Endothelial cell of umbilical vein (primary cell): ENCODE measurements at regions of chr14 and their contacts with region 1.

Region 1: DNA sequence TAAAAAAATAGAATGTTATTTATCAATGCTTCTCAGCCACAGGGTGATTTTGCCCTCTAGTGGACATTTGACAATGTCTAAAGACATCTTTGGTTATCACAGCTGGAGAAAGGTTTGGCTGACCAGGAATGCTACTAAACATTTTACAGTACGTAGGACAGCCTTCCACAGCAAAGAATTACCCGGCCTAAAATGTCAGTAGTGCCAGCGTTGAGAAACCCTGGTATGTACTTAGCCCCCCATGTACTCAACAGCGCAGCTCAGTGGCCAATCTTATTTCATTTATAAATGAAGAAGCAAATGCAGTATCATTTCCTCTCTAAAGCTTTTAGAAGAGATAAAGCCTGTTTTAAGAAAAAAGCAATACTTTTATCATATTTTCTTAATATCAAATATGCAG is 5.8 kb downstream of the MARK3 start:
- DNase-seq: peak; percentile 80
- H3K4me3 ChIP-seq: no peak overlapping the region
- H3K27ac ChIP-seq: no peak overlapping the region
- H3K4me1 ChIP-seq: peaks cover 37% of the 10 kb centered on the region
- H3K27me3 ChIP-seq: no peaks in the 10 kb centered on the region
- CTCF ChIP-seq: peak; percentile 49 to 64
- POLR2A ChIP-seq: no peak

Region 2: DNA sequence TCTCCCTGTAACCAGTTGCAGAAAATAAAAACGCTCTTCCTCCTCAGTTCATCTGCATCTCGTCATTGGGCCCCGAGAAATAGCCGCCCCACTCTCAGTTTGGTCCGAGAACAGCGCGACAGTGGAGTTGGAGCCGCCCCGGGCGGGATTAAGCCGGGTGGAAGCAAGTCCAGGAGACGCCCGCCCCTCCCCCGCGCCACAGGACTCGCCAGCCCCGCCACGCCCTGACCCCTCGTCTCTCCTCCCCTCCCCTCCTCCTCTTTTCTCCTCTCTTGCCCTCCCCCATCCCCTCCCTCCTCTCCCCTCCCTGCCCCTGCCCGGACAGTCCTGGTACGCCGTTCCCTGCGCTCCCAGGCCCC is 184.0 kb before region 1 on chr14:
- CTCF ChIA-PET with region 1: no interaction called
- POLR2A ChIA-PET with region 1: no interaction called
- dilution Hi-C with region 1: no loop called
- intact Hi-C with region 1: no loop called
- DNase-seq: no peak
- H3K4me3 ChIP-seq: peak overlapping the region in 1 of 3 experiments; percentile 39
- H3K27ac ChIP-seq: no peak overlapping the region
- H3K4me1 ChIP-seq: no peaks in the 10 kb centered on the region
- H3K27me3 ChIP-seq: peaks cover 16 to 26% of the 10 kb centered on the region in 2 experiments
- CTCF ChIP-seq: no peak
- POLR2A ChIP-seq: no peak

Region 3: GRCh38 chr14:103292426-103293374 is 98.3 kb before region 1 on chr14:
- CTCF ChIA-PET with region 1: interaction called, 3 read pairs
- POLR2A ChIA-PET with region 1: no interaction called
- dilution Hi-C with region 1: no loop called
- intact Hi-C with region 1: loop called (anchors 5 kb)
- DNase-seq: peak; percentile 53
- H3K4me3 ChIP-seq: no peak overlapping the region
- H3K27ac ChIP-seq: no peak overlapping the region
- H3K4me1 ChIP-seq: no peaks in the 10 kb centered on the region
- H3K27me3 ChIP-seq: peaks cover 0 to 4% of the 10 kb centered on the region in 2 experiments
- CTCF ChIP-seq: peak; percentile 90
- POLR2A ChIP-seq: no peak

Region 4: DNA sequence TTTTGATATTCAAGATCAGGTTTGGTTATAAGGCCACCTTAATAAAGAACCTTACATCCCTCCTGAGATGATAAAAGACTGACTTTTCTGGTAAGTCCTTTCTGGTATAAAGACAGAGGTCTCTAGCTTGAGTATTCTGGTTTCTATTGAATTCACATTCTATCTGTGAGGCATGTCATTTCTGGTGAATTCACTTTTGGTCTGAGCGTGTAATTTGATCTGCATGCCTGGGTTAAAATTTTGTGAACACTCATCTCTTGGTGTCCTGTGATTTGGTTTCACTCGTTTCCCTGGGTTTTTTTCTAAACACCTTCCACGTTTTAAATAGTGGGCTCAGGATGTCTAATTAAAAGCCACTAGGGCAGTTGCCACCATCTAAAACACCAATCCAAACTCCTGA is 44.8 kb before region 1 on chr14:
- CTCF ChIA-PET with region 1: interaction called, 74 read pairs
- POLR2A ChIA-PET with region 1: interaction called, 19 read pairs
- dilution Hi-C with region 1: no loop called
- intact Hi-C with region 1: loop called (anchors 5 kb)
- DNase-seq: no peak
- H3K4me3 ChIP-seq: no peak overlapping the region
- H3K27ac ChIP-seq: no peak overlapping the region
- H3K4me1 ChIP-seq: no peaks in the 10 kb centered on the region
- H3K27me3 ChIP-seq: no peaks in the 10 kb centered on the region
- CTCF ChIP-seq: no peak
- POLR2A ChIP-seq: no peak

Region 5: DNA sequence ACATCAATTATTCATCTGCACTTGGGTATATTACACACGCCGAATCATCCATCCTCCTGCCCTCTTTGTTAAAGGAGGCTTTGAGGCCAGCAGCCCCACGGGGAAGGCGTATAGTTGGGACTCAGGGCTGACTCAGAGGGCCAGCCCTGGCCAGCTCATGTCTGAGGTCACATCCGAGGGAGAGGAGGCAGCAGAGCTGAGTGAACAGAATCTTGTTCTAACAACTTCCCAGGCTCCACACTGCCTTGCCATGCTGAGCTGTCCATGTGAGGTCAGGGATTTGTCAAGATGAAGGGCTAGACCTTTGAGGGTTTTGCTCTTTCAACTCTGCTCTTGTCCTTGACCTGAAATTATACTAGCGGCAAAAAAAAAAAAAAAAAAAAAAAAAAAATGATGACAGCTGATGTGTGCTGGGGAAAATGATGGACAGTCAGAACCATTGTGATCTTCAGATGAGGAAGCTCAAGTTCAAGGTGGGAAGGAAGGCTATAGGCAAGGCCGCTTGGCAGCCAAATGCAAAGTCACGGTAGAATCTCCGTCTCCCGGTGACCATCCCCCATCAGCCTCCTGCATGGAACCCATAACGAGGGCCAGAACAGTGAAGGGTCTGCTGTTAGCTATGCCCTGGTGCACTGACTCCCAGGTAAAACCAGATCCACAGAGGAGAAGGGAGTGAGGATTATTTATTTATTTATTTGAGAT is 18.3 kb before region 1 on chr14:
- CTCF ChIA-PET with region 1: interaction called, 13 read pairs
- POLR2A ChIA-PET with region 1: interaction called, 3 read pairs
- dilution Hi-C with region 1: no loop called
- intact Hi-C with region 1: no loop called
- DNase-seq: peak; percentile 87
- H3K4me3 ChIP-seq: no peak overlapping the region
- H3K27ac ChIP-seq: peak overlapping the region; percentile 1
- H3K4me1 ChIP-seq: peaks cover 4% of the 10 kb centered on the region
- H3K27me3 ChIP-seq: no peaks in the 10 kb centered on the region
- CTCF ChIP-seq: no peak
- POLR2A ChIP-seq: no peak

Region 6: GRCh38 chr14:103401223-103402214 is 10.5 kb after region 1 on chr14:
- CTCF ChIA-PET with region 1: interaction called, 21 read pairs
- POLR2A ChIA-PET with region 1: no interaction called
- dilution Hi-C with region 1: no loop called
- intact Hi-C with region 1: no loop called
- DNase-seq: peak; percentile 79
- H3K4me3 ChIP-seq: no peak overlapping the region
- H3K27ac ChIP-seq: peak overlapping the region; percentile 23
- H3K4me1 ChIP-seq: peaks cover 43% of the 10 kb centered on the region
- H3K27me3 ChIP-seq: no peaks in the 10 kb centered on the region
- CTCF ChIP-seq: no peak
- POLR2A ChIP-seq: no peak

Region 7: GRCh38 chr14:103427485-103428443 is 36.7 kb after region 1 on chr14:
- CTCF ChIA-PET with region 1: interaction called, 18 read pairs
- POLR2A ChIA-PET with region 1: no interaction called
- dilution Hi-C with region 1: no loop called
- intact Hi-C with region 1: no loop called
- DNase-seq: peak; percentile 14
- H3K4me3 ChIP-seq: no peak overlapping the region
- H3K27ac ChIP-seq: no peak overlapping the region
- H3K4me1 ChIP-seq: no peaks in the 10 kb centered on the region
- H3K27me3 ChIP-seq: no peaks in the 10 kb centered on the region
- CTCF ChIP-seq: no peak
- POLR2A ChIP-seq: no peak